Activated CD4-positive, alpha-beta memory T cell treated with anti-CD3 and anti-CD28 coated beads, Interleukin-2, amount 10 ng/mL, durations not matched to agents 7 days and 5 days (primary cell): ENCODE measurements at regions of chr3 and their contacts with region 1.

Region 1: DNA sequence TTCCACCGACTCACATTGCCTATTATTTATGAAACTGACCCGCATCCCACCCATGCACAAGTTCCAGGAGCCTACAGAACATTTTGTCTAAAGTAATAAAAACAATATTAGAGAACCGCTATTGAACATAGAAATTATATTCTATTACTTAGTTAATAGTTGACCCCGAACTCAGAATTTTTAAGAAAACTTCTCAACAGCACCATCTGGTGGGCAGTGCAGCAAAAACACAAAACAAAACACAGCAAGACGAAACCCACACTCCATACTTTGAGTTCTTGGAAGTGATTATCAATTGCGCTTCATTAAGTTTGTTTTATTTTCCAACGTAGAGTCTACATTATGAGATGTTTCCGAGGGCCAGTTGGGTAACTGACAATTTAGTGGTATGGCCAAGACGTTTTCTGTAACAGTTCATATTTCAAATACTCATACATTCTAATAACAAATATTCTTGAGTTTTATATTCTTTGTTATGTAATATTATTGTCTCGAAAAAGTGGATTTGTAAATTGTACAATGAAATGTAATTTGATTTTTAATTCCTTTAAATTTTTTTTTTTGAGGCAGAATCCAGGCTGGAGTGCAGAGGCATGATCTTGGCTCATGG is 24.0 kb upstream of the C3orf70 start:
- DNase-seq: peak; percentile 39
- H3K4me3 Mint-ChIP-seq: no peak overlapping the region
- H3K27ac Mint-ChIP-seq: no peak overlapping the region
- H3K4me1 Mint-ChIP-seq: no peaks in the 10 kb centered on the region
- H3K27me3 Mint-ChIP-seq: peaks cover 1% of the 10 kb centered on the region

Region 2: DNA sequence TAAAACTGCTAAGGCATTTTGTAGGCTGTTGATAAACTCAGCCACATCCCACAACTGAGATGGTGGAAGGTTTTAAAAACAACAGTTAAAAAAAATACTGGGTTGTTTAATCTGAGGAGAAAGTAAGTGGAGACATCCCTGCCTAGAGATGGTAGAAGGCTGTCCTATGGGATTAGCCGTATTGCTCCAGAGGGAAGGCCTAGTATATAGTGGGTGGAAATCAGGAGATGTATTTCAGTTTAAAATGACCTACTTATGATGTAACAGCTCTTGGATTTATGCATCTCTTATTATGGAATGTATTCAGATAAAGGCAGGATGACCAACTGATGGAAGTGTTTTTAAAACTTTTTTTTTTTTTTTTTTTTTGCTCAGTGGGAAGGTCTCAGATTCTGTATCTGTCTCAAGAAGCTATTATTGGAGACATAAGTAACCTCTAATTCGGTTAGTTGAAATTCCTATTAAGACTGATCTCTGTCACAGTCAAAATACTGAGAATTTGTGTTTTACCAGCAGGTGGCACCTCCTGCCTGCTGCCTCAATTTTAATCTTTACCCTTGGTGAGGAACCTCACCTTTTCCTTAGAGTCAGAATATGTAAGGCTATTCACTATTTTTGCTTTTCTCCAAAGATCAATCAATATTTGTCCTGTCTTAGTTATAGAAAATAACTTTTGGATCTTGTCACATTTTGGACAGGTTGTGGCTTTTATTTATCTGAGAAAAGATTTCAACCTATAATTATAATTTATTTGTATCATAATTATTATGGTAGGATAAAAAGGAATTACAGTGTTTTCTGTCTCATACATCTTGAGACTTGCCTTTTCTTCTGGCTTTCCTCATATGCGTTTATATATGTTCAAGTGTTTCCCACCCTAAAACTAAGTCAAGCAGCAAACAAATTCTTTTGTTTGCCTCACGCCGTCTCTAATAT is 301.9 kb before region 1 on chr3:
- CTCF ChIA-PET with region 1: interaction called, 11 read pairs
- POLR2A ChIA-PET with region 1: no interaction called
- DNase-seq: peak; percentile 18
- H3K4me3 Mint-ChIP-seq: no peak overlapping the region
- H3K27ac Mint-ChIP-seq: no peak overlapping the region
- H3K4me1 Mint-ChIP-seq: peaks cover 12% of the 10 kb centered on the region
- H3K27me3 Mint-ChIP-seq: no peaks in the 10 kb centered on the region